AG04450 (cell line): ENCODE measurements at regions of chr3 and their contacts with region 1.

Region 1: GRCh38 chr3:9067352-9067975 is 104.2 kb upstream of the RAD18 start:
- DNase-seq: peak; percentile 32
- H3K4me3 ChIP-seq: no peak overlapping the region
- H3K27ac ChIP-seq: no peak overlapping the region
- H3K27me3 ChIP-seq: peaks cover 7% of the 10 kb centered on the region
- CTCF ChIP-seq: peak; percentile 99

Region 2: GRCh38 chr3:8663177-8664061 is 404.0 kb before region 1 on chr3:
- CTCF ChIA-PET with region 1: interaction called, 12 read pairs
- POLR2A ChIA-PET with region 1: no interaction called
- DNase-seq: peak; percentile 23
- H3K4me3 ChIP-seq: no peak overlapping the region
- H3K27ac ChIP-seq: no peak overlapping the region
- H3K27me3 ChIP-seq: no peaks in the 10 kb centered on the region
- CTCF ChIP-seq: peak; percentile 68

Region 3: GRCh38 chr3:8784676-8785435 is 282.6 kb before region 1 on chr3:
- CTCF ChIA-PET with region 1: no interaction called
- POLR2A ChIA-PET with region 1: no interaction called
- DNase-seq: no peak
- H3K4me3 ChIP-seq: no peak overlapping the region
- H3K27ac ChIP-seq: no peak overlapping the region
- H3K27me3 ChIP-seq: no peaks in the 10 kb centered on the region
- CTCF ChIP-seq: no peak

Region 4: GRCh38 chr3:8970971-8971589 is 96.4 kb before region 1 on chr3:
- CTCF ChIA-PET with region 1: interaction called, 49 read pairs
- POLR2A ChIA-PET with region 1: no interaction called
- DNase-seq: peak; percentile 37
- H3K4me3 ChIP-seq: no peak overlapping the region
- H3K27ac ChIP-seq: no peak overlapping the region
- H3K27me3 ChIP-seq: no peaks in the 10 kb centered on the region
- CTCF ChIP-seq: peak; percentile 99

Region 5: GRCh38 chr3:8987645-8988383 is 79.7 kb before region 1 on chr3:
- CTCF ChIA-PET with region 1: interaction called, 11 read pairs
- POLR2A ChIA-PET with region 1: interaction called, 4 read pairs
- DNase-seq: no peak
- H3K4me3 ChIP-seq: no peak overlapping the region
- H3K27ac ChIP-seq: no peak overlapping the region
- H3K27me3 ChIP-seq: peaks cover 14% of the 10 kb centered on the region
- CTCF ChIP-seq: peak; percentile 75